Activated CD4-positive, alpha-beta T cell treated with anti-CD3 and anti-CD28 coated beads for 36 hours (primary cell): ENCODE measurements at regions of chr17 and their contacts with region 1.

Region 1: GRCh38 chr17:54968262-54968987 is at the starts of genes COX11 and STXBP4:
- DNase-seq: peak; percentile 96
- ATAC-seq: peak; percentile 97
- H3K4me3 Mint-ChIP-seq: no peak within 1 kb of the TSS
- H3K27ac Mint-ChIP-seq: peak within 1 kb of the TSS; percentile 48
- H3K4me1 Mint-ChIP-seq: peaks cover 23% of the 10 kb centered on the region
- H3K27me3 Mint-ChIP-seq: no peaks in the 10 kb centered on the region
- total RNA-seq, gene COX11: 42.6 to 45.4 TPM
- total RNA-seq, gene STXBP4: 5.4 to 7.2 TPM

Region 2: DNA sequence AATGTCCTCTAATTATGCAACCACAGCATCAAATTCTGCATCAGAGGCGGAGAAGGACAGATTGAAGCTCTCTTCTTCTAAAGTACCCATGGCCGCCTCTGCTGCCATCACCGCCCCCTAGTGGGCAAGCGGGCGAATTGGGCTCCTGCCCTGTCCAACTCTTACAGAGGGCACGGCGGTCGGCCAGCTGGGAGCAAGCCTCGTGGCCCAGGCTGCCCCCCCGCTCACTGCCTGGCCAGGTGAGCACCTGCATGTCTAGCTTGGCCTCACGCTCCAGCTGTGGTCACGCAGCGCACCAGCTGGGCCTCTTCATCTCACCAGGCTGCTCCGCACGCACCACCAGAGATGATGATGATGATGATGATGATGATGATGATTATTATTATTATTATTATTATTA is 213.9 kb before region 1 on chr17:
- CTCF ChIA-PET with region 1: no interaction called
- POLR2A ChIA-PET with region 1: no interaction called
- intact Hi-C with region 1: no loop called
- DNase-seq: peak; percentile 36
- ATAC-seq: no peak
- H3K4me3 Mint-ChIP-seq: no peak overlapping the region
- H3K27ac Mint-ChIP-seq: no peak overlapping the region
- H3K4me1 Mint-ChIP-seq: no peaks in the 10 kb centered on the region
- H3K27me3 Mint-ChIP-seq: peaks cover 2% of the 10 kb centered on the region

Region 3: GRCh38 chr17:55098765-55099164 is 130.3 kb after region 1 on chr17:
- CTCF ChIA-PET with region 1: no interaction called
- POLR2A ChIA-PET with region 1: no interaction called
- intact Hi-C with region 1: no loop called
- DNase-seq: no peak
- ATAC-seq: no peak
- H3K4me3 Mint-ChIP-seq: no peak overlapping the region
- H3K27ac Mint-ChIP-seq: no peak overlapping the region
- H3K4me1 Mint-ChIP-seq: no peaks in the 10 kb centered on the region
- H3K27me3 Mint-ChIP-seq: no peaks in the 10 kb centered on the region

Region 4: GRCh38 chr17:55152236-55152635 is 183.8 kb after region 1 on chr17:
- CTCF ChIA-PET with region 1: no interaction called
- POLR2A ChIA-PET with region 1: no interaction called
- intact Hi-C with region 1: no loop called
- DNase-seq: no peak
- ATAC-seq: no peak
- H3K4me3 Mint-ChIP-seq: no peak overlapping the region
- H3K27ac Mint-ChIP-seq: no peak overlapping the region
- H3K4me1 Mint-ChIP-seq: no peaks in the 10 kb centered on the region
- H3K27me3 Mint-ChIP-seq: no peaks in the 10 kb centered on the region

Region 5: DNA sequence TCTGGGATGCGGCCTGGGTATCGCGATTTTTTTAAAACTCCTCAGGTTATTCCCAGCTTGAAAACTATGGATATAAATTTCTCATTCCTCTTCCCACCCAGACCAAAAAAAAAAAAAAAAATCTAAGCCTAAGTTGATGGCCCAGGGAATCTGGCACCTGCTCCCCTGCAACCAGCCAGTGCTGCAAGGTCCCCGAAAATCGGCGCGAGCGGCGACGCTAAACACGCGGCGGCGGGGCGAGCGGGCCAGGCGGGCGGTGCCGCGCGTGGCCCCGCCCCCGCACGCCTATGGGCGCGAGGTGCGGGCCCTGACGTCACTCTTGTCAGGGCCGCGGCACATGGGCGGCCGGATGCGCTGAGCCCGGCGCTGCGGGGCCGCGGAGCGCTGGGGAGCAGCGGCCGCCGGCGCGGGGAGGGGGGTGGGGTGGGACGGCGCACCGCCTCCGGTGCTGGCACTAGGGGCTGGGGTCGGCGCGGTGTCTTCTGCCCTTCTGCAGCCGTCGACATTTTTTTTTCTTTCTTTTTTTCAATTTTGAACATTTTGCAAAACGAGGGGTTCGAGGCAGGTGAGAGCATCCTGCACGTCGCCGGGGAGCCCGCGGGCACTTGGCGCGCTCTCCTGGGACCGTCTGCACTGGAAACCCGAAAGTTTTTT is 296.3 kb after region 1 on chr17 and contains the start of gene HLF:
- CTCF ChIA-PET with region 1: no interaction called
- POLR2A ChIA-PET with region 1: no interaction called
- intact Hi-C with region 1: loop called in 1 of 2 experiments (anchors 1 kb)
- DNase-seq: peak; percentile 86
- ATAC-seq: peak; percentile 94
- H3K4me3 Mint-ChIP-seq: peak within 1 kb of the TSS; percentile 47
- H3K27ac Mint-ChIP-seq: no peak within 1 kb of the TSS
- H3K4me1 Mint-ChIP-seq: peaks cover 16% of the 10 kb centered on the region
- H3K27me3 Mint-ChIP-seq: peaks cover 54% of the 10 kb centered on the region
- total RNA-seq, gene HLF: 0.95 to 1.0 TPM